ENCODE measurements at regions of chr6 and their contacts with region 1.

Region 1: DNA sequence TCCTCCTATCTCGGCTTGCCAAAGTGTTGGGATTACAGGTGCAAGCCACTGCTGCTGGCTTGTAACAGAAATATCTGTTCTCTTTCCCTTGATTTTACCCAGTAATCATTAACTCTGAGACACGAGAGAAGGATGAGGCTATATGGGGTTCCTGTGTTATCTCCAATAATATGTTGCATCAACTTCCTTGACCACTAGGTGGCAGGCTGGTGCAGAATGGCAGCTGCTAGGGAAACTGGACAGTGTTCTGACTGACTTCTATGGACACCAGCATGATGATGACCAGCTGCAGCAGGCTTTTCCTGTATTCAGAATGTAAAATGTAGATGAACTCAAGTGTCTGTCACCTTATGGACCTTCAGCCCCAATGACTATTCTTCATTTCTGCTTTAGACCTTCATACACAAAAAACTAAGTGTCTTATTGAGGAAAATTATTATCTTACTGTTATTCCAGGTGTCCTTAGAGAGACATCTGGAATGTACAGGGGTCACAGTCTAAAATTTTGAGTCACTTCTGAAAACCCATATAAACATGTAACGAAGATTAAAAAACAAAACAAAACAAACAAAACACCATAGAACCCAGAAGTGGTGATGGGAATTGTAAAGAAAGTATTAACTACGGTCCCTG is 20.4 kb upstream of the CD109 start:
- DNase-seq: peak in 2 of 3 donors; percentile 59 to 94
- ATAC-seq: peak; percentile 95
- H3K4me3 ChIP-seq: no peak overlapping the region
- H3K4me1 ChIP-seq: peaks cover 5% of the 10 kb centered on the region
- CTCF ChIP-seq: peak; percentile 86

Region 2: DNA sequence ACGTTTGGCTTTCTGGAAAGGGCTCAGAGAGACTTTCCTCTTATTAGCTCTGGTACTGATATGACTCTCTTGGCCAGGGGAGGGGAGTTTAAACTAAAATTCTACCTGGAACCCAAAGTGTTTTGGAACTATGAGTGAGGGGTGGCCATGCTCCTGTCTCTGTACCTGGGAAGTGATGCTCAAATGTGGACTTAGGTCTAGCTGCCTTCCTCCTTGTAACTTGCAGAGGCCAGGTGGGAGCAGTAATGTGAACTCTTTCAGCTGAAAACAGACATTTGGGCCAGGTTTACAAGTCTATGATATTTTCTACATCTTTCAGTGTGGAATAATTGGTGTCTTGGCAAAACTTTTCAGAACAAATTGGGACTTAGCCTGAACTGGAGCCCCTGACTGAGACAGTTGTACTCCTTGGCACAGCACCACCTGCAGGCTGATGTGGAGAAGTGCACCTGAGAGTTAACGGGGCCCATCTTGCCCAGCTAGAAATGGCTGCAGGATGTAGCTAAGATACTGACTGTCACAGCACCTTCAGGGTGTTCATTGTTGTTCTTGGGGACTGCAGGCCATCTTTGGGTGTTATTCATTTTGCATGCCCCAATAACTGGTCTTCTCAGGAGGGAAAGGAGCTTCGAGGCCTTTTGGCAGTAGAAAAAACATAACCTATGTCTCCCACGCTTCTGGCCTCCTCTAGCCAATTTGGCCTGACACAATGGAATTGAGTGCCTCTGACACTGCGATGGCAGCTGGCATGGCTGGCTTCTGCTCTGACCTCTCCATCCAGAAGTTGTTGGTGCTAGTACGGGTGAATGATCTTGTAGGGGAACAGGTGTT is 57.5 kb after region 1 on chr6:
- intact Hi-C with region 1: loop called in 1 of 2 experiments (anchors 5 kb)
- DNase-seq: peak in 2 of 3 donors; percentile 55 to 61
- ATAC-seq: peak; percentile 93
- H3K4me3 ChIP-seq: no peak overlapping the region
- H3K4me1 ChIP-seq: no peaks in the 10 kb centered on the region
- CTCF ChIP-seq: peak; percentile 83

Measured in mucosa of descending colon (tissue), 3 donors.